ENCODE measurements at regions of chr1 and their contacts with region 1.

Region 1: GRCh38 chr1:110630839-110631663 is 24.9 kb upstream of the KCNA2 start:
- DNase-seq: peak; percentile 74 to 87 (median 84)
- ATAC-seq: peak; percentile 87
- H3K4me3 ChIP-seq: peak overlapping the region; percentile 50
- H3K4me3 Mint-ChIP-seq: no peak overlapping the region
- H3K27ac ChIP-seq: peak overlapping the region; percentile 57
- H3K27ac Mint-ChIP-seq: no peak overlapping the region
- H3K4me1 ChIP-seq: peaks cover 58 to 59% of the 10 kb centered on the region in 2 donors
- H3K4me1 Mint-ChIP-seq: peaks cover 38 to 62% (median 52%) of the 10 kb centered on the region in 7 donors
- H3K27me3 ChIP-seq: no peaks in the 10 kb centered on the region
- H3K27me3 Mint-ChIP-seq: no peaks in the 10 kb centered on the region

Region 2: DNA sequence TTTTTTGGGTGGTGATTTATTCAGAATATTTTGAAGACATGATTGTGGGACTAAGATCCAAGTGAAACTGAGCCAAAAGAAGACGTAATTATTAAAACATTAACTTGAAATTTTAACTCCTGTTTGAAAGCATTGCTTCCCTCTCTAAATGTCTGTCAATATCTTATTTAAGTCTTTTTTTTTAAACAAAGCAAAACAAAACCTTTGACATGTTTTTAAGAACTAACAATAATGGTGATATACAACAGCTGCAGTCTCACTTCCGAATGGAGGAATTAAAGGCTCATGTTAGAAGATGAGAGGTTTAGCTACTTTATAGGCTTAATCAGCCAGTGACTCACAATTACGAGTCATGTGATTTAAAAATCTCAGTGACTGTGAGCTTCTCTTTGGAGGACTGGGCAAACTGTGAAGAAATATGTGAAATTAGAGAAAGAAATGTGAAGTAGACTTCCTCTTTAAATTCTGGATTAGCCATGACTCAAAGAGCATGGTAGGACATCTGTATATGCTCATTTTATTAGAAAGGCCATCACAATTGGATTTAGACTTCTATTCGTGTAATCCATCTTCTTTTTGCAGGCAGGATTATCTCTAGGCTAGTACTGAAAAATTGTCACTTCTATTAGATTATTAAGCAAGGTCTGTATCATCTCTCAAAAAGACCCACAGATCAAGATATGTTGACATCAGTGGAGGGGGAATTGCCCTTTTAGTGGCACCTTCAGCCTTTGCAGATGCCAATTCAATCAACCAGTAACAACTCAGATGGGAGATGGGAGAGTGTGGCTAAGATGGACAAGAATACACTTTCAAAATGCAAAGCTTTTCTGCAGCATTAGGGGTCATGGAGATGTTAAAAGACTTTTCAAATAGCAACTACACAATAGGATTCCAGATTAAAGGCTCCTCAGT is 15.0 kb after region 1 on chr1:
- CTCF ChIA-PET with region 1: interaction called, 43 read pairs
- POLR2A ChIA-PET with region 1: interaction called, 140 read pairs
- intact Hi-C with region 1: loop called (anchors 1 kb)
- DNase-seq: no peak
- ATAC-seq: peak; percentile 60
- H3K4me3 ChIP-seq: peak overlapping the region; percentile 5
- H3K4me3 Mint-ChIP-seq: peak overlapping the region in 6 of 10 donors; percentile 22 to 55 (median 37)
- H3K27ac ChIP-seq: peak overlapping the region; percentile 48
- H3K27ac Mint-ChIP-seq: peak overlapping the region in 2 of 9 donors; percentile 75 to 87
- H3K4me1 ChIP-seq: peaks cover 83 to 92% of the 10 kb centered on the region in 2 donors
- H3K4me1 Mint-ChIP-seq: peaks cover 14 to 48% (median 42%) of the 10 kb centered on the region in 7 donors
- H3K27me3 ChIP-seq: no peaks in the 10 kb centered on the region
- H3K27me3 Mint-ChIP-seq: no peaks in the 10 kb centered on the region

Region 3: GRCh38 chr1:110668549-110668948 is 37.5 kb after region 1 on chr1:
- CTCF ChIA-PET with region 1: interaction called, 18 read pairs
- POLR2A ChIA-PET with region 1: interaction called, 121 read pairs
- intact Hi-C with region 1: loop called in 1 of 2 experiments (anchors 1 kb)
- DNase-seq: peak in 5 of 9 donors; percentile 33 to 51 (median 39)
- ATAC-seq: peak; percentile 18
- H3K4me3 ChIP-seq: peak overlapping the region; percentile 97
- H3K4me3 Mint-ChIP-seq: peak overlapping the region in 9 of 10 donors; percentile 61 to 95 (median 82)
- H3K27ac ChIP-seq: peak overlapping the region; percentile 88
- H3K27ac Mint-ChIP-seq: peak overlapping the region in 8 of 9 donors; percentile 57 to 95 (median 92)
- H3K4me1 ChIP-seq: peaks cover 25 to 42% of the 10 kb centered on the region in 2 donors
- H3K4me1 Mint-ChIP-seq: peaks cover 21 to 35% (median 31%) of the 10 kb centered on the region in 7 donors
- H3K27me3 ChIP-seq: no peaks in the 10 kb centered on the region
- H3K27me3 Mint-ChIP-seq: peaks cover 0 to 2% (median 0%) of the 10 kb centered on the region in 5 donors

Region 4: GRCh38 chr1:110766025-110766647 is 135.1 kb after region 1 on chr1:
- CTCF ChIA-PET with region 1: interaction called, 37 read pairs
- POLR2A ChIA-PET with region 1: interaction called, 10 read pairs
- intact Hi-C with region 1: loop called (anchors 1 kb)
- DNase-seq: peak in 7 of 9 donors; percentile 27 to 74 (median 61)
- ATAC-seq: peak; percentile 85
- H3K4me3 ChIP-seq: no peak overlapping the region
- H3K4me3 Mint-ChIP-seq: peak overlapping the region in 1 of 10 donors; percentile 21
- H3K27ac ChIP-seq: no peak overlapping the region
- H3K27ac Mint-ChIP-seq: no peak overlapping the region
- H3K4me1 ChIP-seq: no peaks in the 10 kb centered on the region
- H3K4me1 Mint-ChIP-seq: peaks cover 0 to 12% (median 5%) of the 10 kb centered on the region in 7 donors
- H3K27me3 ChIP-seq: no peaks in the 10 kb centered on the region
- H3K27me3 Mint-ChIP-seq: peaks cover 0 to 52% (median 8%) of the 10 kb centered on the region in 5 donors

Region 5: DNA sequence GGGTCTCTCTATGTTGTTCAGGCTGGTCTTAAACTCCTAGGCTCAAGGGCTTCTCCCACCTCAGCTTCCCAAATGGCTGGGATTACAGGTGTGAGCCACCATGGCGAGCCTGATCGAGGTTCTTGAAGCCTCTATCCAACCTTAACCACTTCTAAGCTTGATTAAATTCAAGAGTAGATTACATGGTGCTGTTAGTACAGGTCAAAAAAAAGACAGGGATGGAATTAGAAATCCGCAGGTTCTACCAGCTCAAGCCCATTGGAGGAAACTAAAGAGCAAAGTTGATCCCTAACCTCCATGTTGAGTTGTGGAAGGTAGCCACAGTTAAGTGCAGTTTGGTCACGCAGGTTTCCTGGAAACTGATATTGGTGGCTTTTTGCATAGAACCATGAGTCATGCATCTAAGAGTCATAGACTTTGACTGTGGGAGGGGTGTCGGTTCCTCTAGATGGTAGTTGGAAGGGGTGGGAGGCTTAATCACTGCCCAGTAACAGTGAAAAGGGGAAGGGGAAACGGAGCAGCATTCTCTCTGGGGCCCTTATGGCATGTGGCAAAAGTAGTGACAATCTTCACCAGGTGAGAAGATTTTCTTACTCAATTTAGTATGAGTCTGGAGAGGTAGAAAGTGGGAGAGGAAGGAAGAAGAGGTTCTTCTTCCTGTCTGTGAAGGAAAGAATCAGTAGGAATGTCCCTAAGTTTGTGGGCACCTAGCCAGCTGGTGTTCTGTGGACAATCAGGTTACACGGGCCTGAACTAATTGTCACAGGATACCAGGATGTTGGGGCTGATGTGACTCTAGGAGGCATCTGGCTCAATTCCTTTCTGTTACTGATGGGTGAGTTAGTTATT is 248.9 kb after region 1 on chr1:
- CTCF ChIA-PET with region 1: no interaction called
- POLR2A ChIA-PET with region 1: interaction called, 5 read pairs
- intact Hi-C with region 1: loop called in 1 of 2 experiments (anchors 2 kb)
- DNase-seq: peak in 2 of 9 donors; percentile 63 to 65
- ATAC-seq: peak; percentile 73
- H3K4me3 ChIP-seq: peak overlapping the region; percentile 41
- H3K4me3 Mint-ChIP-seq: peak overlapping the region; percentile 78 to 96 (median 88)
- H3K27ac ChIP-seq: peak overlapping the region; percentile 44
- H3K27ac Mint-ChIP-seq: peak overlapping the region; percentile 89 to 99 (median 93)
- H3K4me1 ChIP-seq: peaks cover 69 to 77% of the 10 kb centered on the region in 2 donors
- H3K4me1 Mint-ChIP-seq: peaks cover 71 to 96% (median 85%) of the 10 kb centered on the region in 7 donors
- H3K27me3 ChIP-seq: no peaks in the 10 kb centered on the region
- H3K27me3 Mint-ChIP-seq: no peaks in the 10 kb centered on the region

Region 6: DNA sequence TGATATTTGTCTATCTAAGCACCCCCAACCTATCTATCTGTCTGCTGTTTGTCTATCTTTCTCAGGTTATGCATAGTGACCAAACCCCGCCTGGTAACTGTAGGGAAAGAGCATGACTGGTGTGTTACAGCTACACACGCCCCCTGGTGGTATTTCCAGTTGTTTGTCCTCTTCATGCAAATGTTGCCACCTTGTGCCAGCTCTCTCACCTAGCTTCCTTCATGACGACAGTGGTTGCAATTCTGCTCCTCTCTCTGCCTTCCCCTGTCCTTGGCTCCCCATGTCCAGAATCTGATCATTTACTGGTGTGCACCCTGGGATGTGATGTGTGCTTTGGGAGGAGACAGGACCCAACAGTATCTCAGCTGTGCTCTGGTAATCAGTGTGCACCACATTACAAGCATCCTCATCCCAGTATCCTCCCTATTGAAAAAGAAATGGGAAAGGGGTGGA is 1116.3 kb after region 1 on chr1:
- CTCF ChIA-PET with region 1: no interaction called
- POLR2A ChIA-PET with region 1: no interaction called
- intact Hi-C with region 1: loop called in 1 of 2 experiments (anchors 10 kb)
- DNase-seq: peak in 8 of 9 donors; percentile 10 to 61 (median 43)
- ATAC-seq: peak; percentile 85
- H3K4me3 ChIP-seq: no peak overlapping the region
- H3K4me3 Mint-ChIP-seq: no peak overlapping the region
- H3K27ac ChIP-seq: no peak overlapping the region
- H3K27ac Mint-ChIP-seq: no peak overlapping the region
- H3K4me1 ChIP-seq: no peaks in the 10 kb centered on the region
- H3K4me1 Mint-ChIP-seq: peaks cover 0 to 21% (median 0%) of the 10 kb centered on the region in 7 donors
- H3K27me3 ChIP-seq: no peaks in the 10 kb centered on the region
- H3K27me3 Mint-ChIP-seq: peaks cover 0 to 23% (median 0%) of the 10 kb centered on the region in 5 donors